ENCODE measurements at regions of chr6 and their contacts with region 1.

Region 1: DNA sequence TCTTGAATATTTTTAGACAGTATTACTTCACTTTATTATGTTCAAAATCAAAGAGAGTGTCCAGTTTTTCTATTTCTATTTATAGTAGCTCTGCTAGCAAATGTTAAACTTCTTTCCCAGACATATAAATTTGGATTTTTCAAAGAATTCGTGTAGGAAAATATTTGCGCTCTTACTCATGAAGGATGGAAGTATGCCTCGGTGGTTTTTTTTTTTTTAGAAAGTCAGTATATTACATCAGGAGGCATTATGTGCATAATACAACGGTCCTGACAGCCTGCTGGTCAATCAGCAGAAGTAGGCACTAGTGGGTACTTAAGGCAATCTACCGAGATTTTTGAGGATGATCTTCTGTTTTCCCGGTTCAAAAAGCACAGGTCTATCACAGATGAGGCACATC is 249.3 kb downstream of the TBX18 start:
- DNase-seq: no peak
- ATAC-seq: peak; percentile 60
- H3K4me3 ChIP-seq: peak overlapping the region in 1 of 2 donors; percentile 79
- H3K27ac ChIP-seq: peak overlapping the region; percentile 47 to 76
- H3K4me1 ChIP-seq: peaks cover 3 to 4% of the 10 kb centered on the region in 2 donors
- H3K27me3 ChIP-seq: no peaks in the 10 kb centered on the region

Region 2: GRCh38 chr6:83403191-83403590 is 1111.9 kb before region 1 on chr6:
- intact Hi-C with region 1: no loop called
- DNase-seq: no peak
- ATAC-seq: no peak
- H3K4me3 ChIP-seq: no peak overlapping the region
- H3K27ac ChIP-seq: no peak overlapping the region
- H3K4me1 ChIP-seq: no peaks in the 10 kb centered on the region
- H3K27me3 ChIP-seq: no peaks in the 10 kb centered on the region

Region 3: DNA sequence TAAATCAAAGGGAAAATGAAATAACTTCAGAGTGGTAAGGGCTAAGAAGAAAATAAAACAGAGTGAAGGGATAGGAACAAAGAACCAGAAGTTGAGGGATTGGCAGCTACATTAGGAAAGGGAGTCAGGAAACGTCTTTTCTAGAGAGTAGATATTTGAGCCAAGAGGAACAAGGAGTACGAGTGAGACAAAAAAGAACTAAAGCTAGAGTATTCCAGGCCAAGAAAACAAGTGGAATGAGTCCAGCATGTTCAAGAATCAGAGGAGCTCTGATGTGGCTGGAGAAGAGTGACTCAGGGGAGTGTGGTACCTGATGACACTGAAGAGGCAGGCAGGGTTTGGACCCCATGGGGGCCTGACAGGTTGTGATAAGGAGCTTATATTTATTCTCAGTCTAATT is 353.9 kb before region 1 on chr6:
- intact Hi-C with region 1: no loop called
- DNase-seq: no peak
- ATAC-seq: peak; percentile 36
- H3K4me3 ChIP-seq: no peak overlapping the region
- H3K27ac ChIP-seq: no peak overlapping the region
- H3K4me1 ChIP-seq: peaks cover 2 to 4% of the 10 kb centered on the region in 2 donors
- H3K27me3 ChIP-seq: no peaks in the 10 kb centered on the region

Region 4: DNA sequence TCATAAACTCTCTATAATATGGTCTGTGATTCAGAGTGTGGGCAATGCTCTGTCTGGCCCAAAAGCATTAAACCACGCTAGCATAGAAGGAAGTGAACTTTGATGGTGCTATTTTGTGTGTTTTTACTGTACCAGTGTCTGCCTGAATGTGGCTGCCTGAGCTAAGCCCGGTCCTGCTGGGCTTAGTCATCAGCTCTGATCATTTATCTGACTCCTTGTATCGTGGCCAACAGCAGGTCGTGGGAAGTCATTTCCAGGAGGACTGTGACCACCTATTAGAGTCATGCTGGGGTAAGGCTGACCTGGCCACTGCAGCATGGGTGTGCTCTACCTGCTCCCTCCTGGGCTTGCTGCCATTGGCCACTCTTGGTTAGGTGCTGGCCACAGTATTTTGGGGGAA is 48.6 kb before region 1 on chr6:
- intact Hi-C with region 1: loop called in 1 of 2 experiments (anchors 5 kb)
- DNase-seq: peak in 1 of 2 donors; percentile 55
- ATAC-seq: no peak
- H3K4me3 ChIP-seq: no peak overlapping the region
- H3K27ac ChIP-seq: no peak overlapping the region
- H3K4me1 ChIP-seq: peaks cover 2 to 3% of the 10 kb centered on the region in 2 donors
- H3K27me3 ChIP-seq: no peaks in the 10 kb centered on the region

Region 5: GRCh38 chr6:84739866-84740208 is 224.8 kb after region 1 on chr6:
- intact Hi-C with region 1: no loop called
- DNase-seq: no peak
- ATAC-seq: no peak
- H3K4me3 ChIP-seq: no peak overlapping the region
- H3K27ac ChIP-seq: no peak overlapping the region
- H3K4me1 ChIP-seq: peaks cover 4 to 6% of the 10 kb centered on the region in 2 donors
- H3K27me3 ChIP-seq: no peaks in the 10 kb centered on the region